Mammary epithelial cell (primary cell): ENCODE measurements at regions of chr5 and their contacts with region 1.

Region 1: GRCh38 chr5:34915139-34915855 is at the starts of genes BRIX1 and RAD1:
- DNase-seq: peak; percentile 97
- H3K4me3 ChIP-seq: peak within 1 kb of the TSS; percentile 76 to 99 (median 92)
- H3K27ac ChIP-seq: peak within 1 kb of the TSS; percentile 65
- H3K4me1 ChIP-seq: peaks cover 9% of the 10 kb centered on the region
- H3K27me3 ChIP-seq: no peaks in the 10 kb centered on the region
- CTCF ChIP-seq: peak in 1 of 2 donors; percentile 33
- total RNA-seq, gene BRIX1: 20.8 to 39.8 TPM
- total RNA-seq, gene RAD1: 25.0 to 25.7 TPM

Region 2: GRCh38 chr5:34007621-34008600 is 907.4 kb before region 1 on chr5 and contains the start of gene AMACR:
- CTCF ChIA-PET with region 1: no interaction called
- dilution Hi-C with region 1: no loop called
- in situ Hi-C with region 1: loop called (anchors 25 kb)
- intact Hi-C with region 1: loop called (anchors 10 kb)
- DNase-seq: peak; percentile 89
- H3K4me3 ChIP-seq: peak within 1 kb of the TSS; percentile 86 to 89 (median 87)
- H3K27ac ChIP-seq: peak within 1 kb of the TSS; percentile 80
- H3K4me1 ChIP-seq: peaks cover 14% of the 10 kb centered on the region
- H3K27me3 ChIP-seq: no peaks in the 10 kb centered on the region
- CTCF ChIP-seq: peak in 1 of 2 donors; percentile 28
- total RNA-seq, gene AMACR: 14.2 to 19.5 TPM

Region 3: DNA sequence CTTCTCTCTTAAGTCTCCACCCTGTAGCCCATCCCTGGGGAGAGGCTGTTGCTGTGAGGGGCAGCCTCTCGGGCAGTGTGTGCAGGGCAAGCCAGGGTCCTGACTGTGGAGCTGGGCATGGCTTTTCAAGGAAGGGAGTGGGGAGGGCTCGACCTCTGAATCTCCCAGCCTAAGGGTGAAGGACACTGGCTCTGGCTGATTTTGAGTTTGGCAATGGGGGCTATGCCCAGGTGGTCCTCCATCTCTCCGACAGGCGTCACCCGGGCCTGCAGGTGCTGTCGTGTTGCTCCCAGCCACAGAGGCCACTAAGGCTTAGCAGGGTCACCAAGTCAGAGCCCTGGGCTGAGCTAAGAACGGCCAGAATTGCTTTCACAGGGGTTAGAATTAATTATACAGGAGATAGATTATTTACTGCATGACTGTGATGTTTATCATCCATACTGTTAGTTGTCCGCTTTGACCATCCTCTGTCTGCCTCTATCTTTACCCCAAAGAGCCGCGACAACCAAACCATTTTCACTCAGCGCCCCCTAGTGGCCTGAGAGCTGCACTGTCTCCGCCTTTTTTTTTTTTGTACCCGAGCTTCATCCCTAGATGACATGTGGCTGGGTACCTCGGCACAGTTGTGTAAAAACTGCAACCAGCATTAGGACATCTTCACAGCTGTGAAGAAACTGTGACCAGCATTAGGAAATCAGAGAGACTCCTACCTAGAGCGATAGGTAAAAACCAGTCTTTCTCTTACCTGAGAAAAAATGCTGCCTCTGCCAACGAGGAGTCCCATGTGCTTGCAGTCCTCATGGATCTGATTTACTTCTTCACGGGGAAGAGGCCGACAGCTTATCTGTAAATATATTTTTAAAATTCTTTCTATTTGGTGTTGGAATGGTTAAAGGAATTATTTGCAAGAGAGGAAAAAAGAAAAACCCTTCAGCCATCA is 88.0 kb after region 1 on chr5:
- CTCF ChIA-PET with region 1: no interaction called
- dilution Hi-C with region 1: no loop called
- in situ Hi-C with region 1: no loop called
- intact Hi-C with region 1: loop called (anchors 1 kb)
- DNase-seq: peak; percentile 42
- H3K4me3 ChIP-seq: no peak overlapping the region
- H3K27ac ChIP-seq: no peak overlapping the region
- H3K4me1 ChIP-seq: no peaks in the 10 kb centered on the region
- H3K27me3 ChIP-seq: no peaks in the 10 kb centered on the region
- CTCF ChIP-seq: peak; percentile 92 to 94